Heart right ventricle (tissue), 16 donors: ENCODE measurements at regions of chr22 and their contacts with region 1.

Region 1: DNA sequence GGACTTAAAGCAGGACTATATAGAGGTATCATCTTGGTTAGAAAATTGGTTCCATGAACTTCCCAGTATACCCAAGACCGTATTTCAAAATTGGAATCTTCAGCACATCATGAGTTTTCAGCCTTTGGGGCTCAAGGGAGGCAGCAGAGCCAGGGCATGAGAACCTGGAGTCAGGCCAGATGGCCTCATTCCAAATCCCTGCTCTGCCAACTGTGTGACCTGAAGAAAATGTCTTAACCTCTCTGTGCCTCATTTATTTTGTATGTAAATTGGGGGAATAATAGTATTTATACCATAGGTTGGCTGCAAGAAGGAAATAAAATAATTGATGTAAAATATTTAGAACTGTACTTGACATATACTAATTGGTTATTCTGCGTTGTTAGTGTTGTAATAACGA is 987.6 kb downstream of the TBC1D22A start:
- DNase-seq: no peak
- ATAC-seq: no peak
- H3K4me3 ChIP-seq: no peak overlapping the region
- H3K27ac ChIP-seq: no peak overlapping the region
- H3K4me1 ChIP-seq: no peaks in the 10 kb centered on the region
- H3K27me3 ChIP-seq: peaks cover 0 to 57% (median 36%) of the 10 kb centered on the region in 7 donors
- CTCF ChIP-seq: no peak

Region 2: DNA sequence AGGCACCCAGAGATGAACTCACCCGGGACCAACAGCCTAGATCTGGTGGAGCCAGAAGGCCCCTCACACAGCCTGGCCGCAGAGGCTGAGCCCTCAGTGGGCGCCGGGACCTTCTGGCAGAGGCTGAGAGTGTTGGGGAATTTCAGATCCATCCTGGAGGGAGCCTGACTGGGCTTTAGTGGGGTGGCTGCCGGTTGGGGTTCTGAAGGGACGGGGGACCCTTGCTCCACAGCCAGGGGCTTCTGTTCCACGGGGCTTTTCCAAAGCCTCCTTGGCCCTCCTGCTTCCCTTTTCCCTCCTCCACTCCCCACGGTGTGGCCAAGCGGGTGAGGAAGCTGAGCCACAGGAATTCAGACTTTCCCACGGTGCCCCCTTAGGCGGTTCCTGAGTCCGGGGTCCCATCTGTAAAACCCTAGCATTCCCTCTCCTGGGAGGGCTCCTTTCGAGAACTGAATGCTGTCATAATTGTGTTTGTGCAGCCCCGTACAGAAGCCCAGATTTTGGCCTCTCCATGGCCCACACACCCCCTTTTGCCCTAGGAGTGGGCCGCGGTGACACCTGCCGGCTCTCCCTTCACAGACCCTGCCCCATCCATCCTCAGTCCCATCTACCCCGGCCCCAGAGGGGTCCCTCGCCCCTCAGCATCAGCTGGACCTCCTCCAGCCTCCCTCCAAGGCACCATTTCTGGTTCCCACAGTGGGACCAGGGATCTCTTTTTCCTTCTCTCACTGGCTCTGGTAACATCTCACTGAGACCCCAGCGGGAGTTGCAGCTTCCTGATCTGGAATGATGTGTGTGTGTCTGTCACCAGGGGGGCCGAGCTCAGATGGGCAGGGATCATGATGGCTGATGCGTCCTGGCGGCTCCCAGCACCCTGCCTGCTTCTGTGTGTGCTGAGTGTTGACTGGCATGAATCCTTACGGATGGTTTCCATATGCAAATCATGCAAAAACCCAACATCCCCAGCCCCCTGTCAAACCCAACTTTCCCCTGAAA is 60.7 kb after region 1 on chr22:
- intact Hi-C with region 1: loop called in 1 of 10 experiments (anchors 10 kb)
- DNase-seq: no peak
- ATAC-seq: no peak
- H3K4me3 ChIP-seq: no peak overlapping the region
- H3K27ac ChIP-seq: no peak overlapping the region
- H3K4me1 ChIP-seq: no peaks in the 10 kb centered on the region
- H3K27me3 ChIP-seq: peaks cover 0 to 46% (median 26%) of the 10 kb centered on the region in 7 donors
- CTCF ChIP-seq: no peak